CD4-positive, alpha-beta T cell (primary cell): ENCODE measurements at regions of chr19 and their contacts with region 1.

Region 1: GRCh38 chr19:3108775-3109174 is 14.6 kb downstream of the GNA11 start:
- DNase-seq: peak; percentile 60 to 85 (median 67)
- ATAC-seq: peak; percentile 66
- H3K4me3 ChIP-seq: no peak overlapping the region
- H3K4me3 Mint-ChIP-seq: no peak overlapping the region
- H3K27ac ChIP-seq: no peak overlapping the region
- H3K27ac Mint-ChIP-seq: no peak overlapping the region
- H3K4me1 ChIP-seq: peaks cover 12% of the 10 kb centered on the region
- H3K4me1 Mint-ChIP-seq: peaks cover 10% of the 10 kb centered on the region
- H3K27me3 ChIP-seq: no peaks in the 10 kb centered on the region
- H3K27me3 Mint-ChIP-seq: peaks cover 3% of the 10 kb centered on the region
- CTCF ChIP-seq: peak; percentile 88

Region 2: GRCh38 chr19:2618611-2619010 is 490.2 kb before region 1 on chr19:
- CTCF ChIA-PET with region 1: no interaction called
- POLR2A ChIA-PET with region 1: no interaction called
- intact Hi-C with region 1: no loop called
- DNase-seq: peak; percentile 40 to 84 (median 64)
- ATAC-seq: peak; percentile 27
- H3K4me3 ChIP-seq: peak overlapping the region; percentile 26
- H3K4me3 Mint-ChIP-seq: peak overlapping the region; percentile 87
- H3K27ac ChIP-seq: peak overlapping the region; percentile 39 to 61
- H3K27ac Mint-ChIP-seq: peak overlapping the region; percentile 92
- H3K4me1 ChIP-seq: peaks cover 77% of the 10 kb centered on the region
- H3K4me1 Mint-ChIP-seq: peaks cover 65% of the 10 kb centered on the region
- H3K27me3 ChIP-seq: no peaks in the 10 kb centered on the region
- H3K27me3 Mint-ChIP-seq: no peaks in the 10 kb centered on the region
- CTCF ChIP-seq: no peak

Region 3: GRCh38 chr19:2811735-2812406 is 296.9 kb before region 1 on chr19:
- CTCF ChIA-PET with region 1: no interaction called
- POLR2A ChIA-PET with region 1: no interaction called
- intact Hi-C with region 1: no loop called
- DNase-seq: no peak
- ATAC-seq: no peak
- H3K4me3 ChIP-seq: no peak overlapping the region
- H3K4me3 Mint-ChIP-seq: no peak overlapping the region
- H3K27ac ChIP-seq: no peak overlapping the region
- H3K27ac Mint-ChIP-seq: no peak overlapping the region
- H3K4me1 ChIP-seq: no peaks in the 10 kb centered on the region
- H3K4me1 Mint-ChIP-seq: no peaks in the 10 kb centered on the region
- H3K27me3 ChIP-seq: no peaks in the 10 kb centered on the region
- H3K27me3 Mint-ChIP-seq: no peaks in the 10 kb centered on the region
- CTCF ChIP-seq: no peak

Region 4: DNA sequence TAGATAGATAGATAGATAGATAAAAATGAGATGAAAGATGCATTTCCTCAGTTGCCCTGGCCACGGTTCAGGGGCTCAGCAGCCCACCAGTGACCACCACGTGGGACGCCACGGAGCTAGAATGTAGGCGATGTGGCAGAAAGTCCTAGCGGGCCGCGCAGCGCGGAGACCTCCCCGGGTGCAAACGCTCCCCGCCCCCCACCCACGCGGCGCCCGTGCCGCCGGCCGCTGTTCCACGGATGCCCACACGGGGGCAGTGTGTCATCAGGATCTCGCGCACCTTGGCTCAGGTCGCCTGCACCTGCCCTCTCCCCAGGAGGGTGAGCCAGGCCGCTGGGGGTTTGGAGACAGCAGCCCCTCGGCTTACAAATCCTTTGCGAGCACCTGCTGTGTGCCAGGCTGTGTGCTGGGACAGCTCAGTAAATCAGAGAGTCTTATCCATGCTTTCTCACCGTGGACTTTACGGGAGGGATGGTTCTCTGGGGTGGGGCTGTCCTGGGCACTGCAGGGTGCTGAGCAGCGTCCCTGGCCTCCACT is 32.8 kb before region 1 on chr19:
- CTCF ChIA-PET with region 1: interaction called, 18 read pairs
- POLR2A ChIA-PET with region 1: interaction called, 9 read pairs
- intact Hi-C with region 1: loop called (anchors 1 kb)
- DNase-seq: peak; percentile 61 to 90 (median 76)
- ATAC-seq: peak; percentile 99
- H3K4me3 ChIP-seq: no peak overlapping the region
- H3K4me3 Mint-ChIP-seq: no peak overlapping the region
- H3K27ac ChIP-seq: no peak overlapping the region
- H3K27ac Mint-ChIP-seq: no peak overlapping the region
- H3K4me1 ChIP-seq: peaks cover 10% of the 10 kb centered on the region
- H3K4me1 Mint-ChIP-seq: peaks cover 3% of the 10 kb centered on the region
- H3K27me3 ChIP-seq: no peaks in the 10 kb centered on the region
- H3K27me3 Mint-ChIP-seq: no peaks in the 10 kb centered on the region
- CTCF ChIP-seq: peak; percentile 90

Region 5: GRCh38 chr19:3210347-3211017 is 101.7 kb after region 1 on chr19:
- CTCF ChIA-PET with region 1: no interaction called
- POLR2A ChIA-PET with region 1: no interaction called
- intact Hi-C with region 1: no loop called
- DNase-seq: peak; percentile 52 to 78 (median 66)
- ATAC-seq: peak; percentile 94
- H3K4me3 ChIP-seq: no peak overlapping the region
- H3K4me3 Mint-ChIP-seq: no peak overlapping the region
- H3K27ac ChIP-seq: no peak overlapping the region
- H3K27ac Mint-ChIP-seq: no peak overlapping the region
- H3K4me1 ChIP-seq: peaks cover 6% of the 10 kb centered on the region
- H3K4me1 Mint-ChIP-seq: no peaks in the 10 kb centered on the region
- H3K27me3 ChIP-seq: no peaks in the 10 kb centered on the region
- H3K27me3 Mint-ChIP-seq: no peaks in the 10 kb centered on the region
- CTCF ChIP-seq: peak; percentile 70